ENCODE measurements at regions of chr4 and their contacts with region 1.

Region 1: DNA sequence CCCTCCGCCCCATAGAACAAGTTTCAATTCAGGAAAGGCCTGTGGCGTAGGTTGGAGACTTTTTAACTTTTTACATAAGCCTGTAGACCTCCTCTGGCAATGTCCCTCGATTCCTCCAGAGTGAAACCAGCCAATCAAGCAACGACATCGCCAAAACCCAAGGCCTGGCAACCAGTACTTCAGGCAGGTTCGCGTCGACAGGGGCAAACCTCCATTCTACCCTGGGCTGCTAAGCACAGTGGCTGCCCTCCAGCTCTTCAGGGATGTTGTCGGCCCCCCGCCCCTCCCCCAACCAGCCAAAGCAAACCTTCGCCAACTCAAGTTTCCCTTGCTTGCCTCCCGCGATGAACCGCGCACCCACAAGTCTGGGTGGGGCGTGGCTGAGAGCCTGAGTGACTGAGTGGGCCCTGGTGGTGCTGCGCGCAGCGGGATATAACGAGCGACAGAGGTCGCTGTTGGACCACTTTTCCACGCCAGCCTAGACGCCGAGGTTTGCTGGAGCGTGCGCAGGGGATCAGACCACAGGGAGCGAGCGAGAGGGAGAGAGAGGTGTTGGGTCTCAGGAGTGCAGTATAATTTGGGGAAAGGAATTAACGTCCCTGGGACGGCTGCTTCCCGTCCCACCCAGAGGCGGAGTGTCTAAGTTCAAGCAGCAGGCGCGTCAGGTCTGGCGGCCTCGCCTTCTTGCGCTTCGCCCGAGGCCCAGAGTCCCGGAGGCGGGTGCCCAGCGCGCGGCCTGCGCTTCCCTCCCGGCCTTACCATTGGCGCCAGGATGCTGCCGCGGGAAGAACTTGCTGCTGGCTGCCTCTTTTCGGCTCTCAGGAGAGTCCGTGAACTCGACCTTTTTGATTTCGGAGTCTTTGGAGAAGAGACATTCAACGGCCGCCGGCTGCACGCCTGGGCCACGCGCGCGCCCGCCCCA is 9.0 kb upstream of the PITX2 start:
- DNase-seq: peak; percentile 77 to 84 (median 82)
- ATAC-seq: peak; percentile 95 to 98
- H3K4me3 ChIP-seq: no peak overlapping the region
- H3K27ac ChIP-seq: no peak overlapping the region
- H3K4me1 ChIP-seq: no peaks in the 10 kb centered on the region
- H3K27me3 ChIP-seq: peaks cover 4% of the 10 kb centered on the region

Region 2: DNA sequence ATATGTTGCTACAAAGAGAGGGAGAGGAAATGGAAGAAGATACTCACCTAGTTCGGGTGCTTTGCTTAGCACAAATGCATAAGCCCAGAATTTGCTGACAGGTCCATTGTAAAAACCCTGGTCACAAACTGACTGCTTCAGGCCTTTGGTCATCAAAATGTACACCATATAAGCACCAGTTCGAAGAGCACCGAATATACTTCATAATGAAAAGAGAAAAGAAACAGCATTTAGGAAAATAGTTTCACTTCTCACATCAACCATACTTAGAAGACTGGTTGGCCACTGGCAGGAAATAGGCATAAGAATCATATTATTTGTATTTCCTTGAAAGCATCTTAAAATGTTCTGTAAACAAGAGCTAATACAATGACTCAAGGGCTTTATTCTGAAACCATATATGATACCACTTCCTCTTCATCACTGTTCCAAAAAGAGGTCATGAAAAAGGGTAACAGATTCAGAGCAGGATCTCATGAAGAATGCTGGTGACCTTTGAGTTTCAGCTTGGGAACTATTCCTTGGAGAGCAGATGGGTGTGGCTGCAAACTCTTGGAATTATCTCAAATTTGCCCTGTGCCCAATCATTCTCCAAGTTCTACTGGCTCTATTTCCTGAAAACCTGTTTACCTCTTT is 572.2 kb before region 1 on chr4:
- intact Hi-C with region 1: no loop called
- DNase-seq: no peak
- ATAC-seq: peak in 1 of 2 donors; percentile 40
- H3K4me3 ChIP-seq: no peak overlapping the region
- H3K27ac ChIP-seq: no peak overlapping the region
- H3K4me1 ChIP-seq: peaks cover 2% of the 10 kb centered on the region
- H3K27me3 ChIP-seq: no peaks in the 10 kb centered on the region

Region 3: GRCh38 chr4:110418641-110419040 is 213.2 kb before region 1 on chr4:
- intact Hi-C with region 1: no loop called
- DNase-seq: no peak
- ATAC-seq: no peak
- H3K4me3 ChIP-seq: no peak overlapping the region
- H3K27ac ChIP-seq: no peak overlapping the region
- H3K4me1 ChIP-seq: no peaks in the 10 kb centered on the region
- H3K27me3 ChIP-seq: no peaks in the 10 kb centered on the region

Region 4: GRCh38 chr4:110854021-110854678 is 222.3 kb after region 1 on chr4:
- intact Hi-C with region 1: no loop called
- DNase-seq: no peak
- ATAC-seq: no peak
- H3K4me3 ChIP-seq: no peak overlapping the region
- H3K27ac ChIP-seq: no peak overlapping the region
- H3K4me1 ChIP-seq: no peaks in the 10 kb centered on the region
- H3K27me3 ChIP-seq: no peaks in the 10 kb centered on the region

Region 5: DNA sequence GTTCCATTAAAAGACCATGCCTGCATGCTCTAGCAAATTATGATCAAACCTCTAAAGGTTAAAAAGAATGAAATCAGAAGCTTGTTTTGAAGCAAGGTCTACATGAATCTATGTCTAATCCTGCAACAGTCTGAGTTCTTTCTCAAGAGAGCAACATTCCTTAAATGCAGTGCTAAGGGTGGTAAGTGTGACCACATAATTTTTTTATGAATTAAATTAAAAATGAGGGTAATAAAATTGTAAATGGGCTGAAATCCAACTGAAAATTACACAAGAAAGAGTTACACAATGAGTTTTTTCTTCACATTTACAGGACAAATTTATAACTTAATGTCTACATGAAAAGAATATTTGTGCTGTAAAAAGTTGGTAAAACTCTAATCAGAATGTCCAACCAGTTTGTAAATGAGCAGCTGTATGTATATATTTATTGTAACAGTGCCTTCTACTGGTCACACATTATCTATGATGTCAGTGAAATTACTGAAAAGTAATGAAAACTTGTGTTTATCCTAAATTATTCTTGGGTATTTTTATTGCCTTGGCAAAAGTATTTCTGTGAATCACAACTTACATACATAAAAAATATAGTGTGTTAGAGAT is 327.3 kb after region 1 on chr4:
- intact Hi-C with region 1: loop called in 3 of 4 experiments (anchors 5 to 10 kb)
- DNase-seq: no peak
- ATAC-seq: no peak
- H3K4me3 ChIP-seq: no peak overlapping the region
- H3K27ac ChIP-seq: no peak overlapping the region
- H3K4me1 ChIP-seq: no peaks in the 10 kb centered on the region
- H3K27me3 ChIP-seq: no peaks in the 10 kb centered on the region

Region 6: GRCh38 chr4:111283061-111283677 is 651.3 kb after region 1 on chr4:
- intact Hi-C with region 1: loop called in 1 of 4 experiments (anchors 10 kb)
- DNase-seq: peak; percentile 15 to 55 (median 39)
- ATAC-seq: no peak
- H3K4me3 ChIP-seq: no peak overlapping the region
- H3K27ac ChIP-seq: no peak overlapping the region
- H3K4me1 ChIP-seq: no peaks in the 10 kb centered on the region
- H3K27me3 ChIP-seq: no peaks in the 10 kb centered on the region

Region 7: DNA sequence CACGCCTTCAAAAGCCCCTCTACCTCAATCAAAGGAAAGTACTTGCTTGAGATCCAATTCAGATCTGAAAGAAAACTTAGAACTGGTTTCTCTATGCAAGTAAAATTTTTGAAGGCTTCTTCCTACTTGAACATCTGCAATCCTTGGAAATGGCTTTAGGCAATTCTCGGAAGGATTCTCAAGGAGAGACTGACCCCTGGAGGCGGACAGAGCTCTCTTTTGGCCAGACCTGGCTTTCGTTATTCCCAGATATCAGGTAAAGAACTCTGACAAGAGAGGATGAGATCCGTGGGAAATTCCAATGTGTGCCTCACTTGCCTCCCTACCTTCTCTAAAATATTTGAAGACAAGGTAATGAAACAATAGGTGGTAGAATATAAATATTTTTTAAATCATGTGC is 843.2 kb after region 1 on chr4:
- intact Hi-C with region 1: loop called in 2 of 4 experiments (anchors 5 to 10 kb)
- DNase-seq: peak in 2 of 3 donors; percentile 39 to 56
- ATAC-seq: no peak
- H3K4me3 ChIP-seq: no peak overlapping the region
- H3K27ac ChIP-seq: no peak overlapping the region
- H3K4me1 ChIP-seq: no peaks in the 10 kb centered on the region
- H3K27me3 ChIP-seq: no peaks in the 10 kb centered on the region

Region 8: DNA sequence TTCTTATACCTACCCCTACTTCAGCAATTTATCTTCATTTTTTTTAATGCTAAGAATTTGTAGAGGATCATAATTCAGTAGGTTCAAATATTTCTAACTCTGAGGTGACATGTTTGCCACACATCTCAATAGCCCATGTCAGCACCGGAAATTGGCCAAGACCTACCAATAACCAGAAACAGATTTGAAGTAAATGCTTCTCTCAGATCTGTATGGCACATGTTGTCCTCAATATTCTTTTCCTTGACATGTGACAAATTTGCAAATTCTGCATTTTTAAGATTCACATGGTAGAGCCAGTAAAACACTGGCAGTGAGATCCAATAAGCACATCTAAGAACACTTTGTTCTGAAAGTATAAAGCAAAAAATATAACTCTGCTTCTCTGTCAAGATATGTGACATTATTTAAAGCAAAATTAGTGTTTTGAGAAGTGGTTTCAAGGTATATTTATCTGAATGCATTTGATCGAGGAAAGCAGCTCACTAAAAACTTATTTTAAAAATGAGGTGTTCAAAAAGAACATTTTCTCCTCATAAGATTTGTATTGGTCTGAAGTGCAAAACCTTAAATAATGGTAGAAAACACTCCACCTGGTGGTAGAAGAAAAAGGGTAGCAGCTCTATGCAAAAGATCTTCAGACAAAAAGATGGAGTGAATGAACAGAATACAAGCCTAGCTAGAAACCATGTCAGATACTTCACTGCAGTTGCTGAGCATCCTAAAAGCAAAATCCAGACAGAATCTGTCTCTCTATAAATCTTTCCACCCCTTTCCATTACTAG is 999.6 kb after region 1 on chr4:
- intact Hi-C with region 1: loop called in 2 of 4 experiments (anchors 10 kb)
- DNase-seq: peak in 1 of 3 donors; percentile 7
- ATAC-seq: no peak
- H3K4me3 ChIP-seq: no peak overlapping the region
- H3K27ac ChIP-seq: no peak overlapping the region
- H3K4me1 ChIP-seq: no peaks in the 10 kb centered on the region
- H3K27me3 ChIP-seq: no peaks in the 10 kb centered on the region

Measured in right cardiac atrium (tissue), 5 donors.